ENCODE measurements at regions of chr2 and their contacts with region 1.

Region 1: DNA sequence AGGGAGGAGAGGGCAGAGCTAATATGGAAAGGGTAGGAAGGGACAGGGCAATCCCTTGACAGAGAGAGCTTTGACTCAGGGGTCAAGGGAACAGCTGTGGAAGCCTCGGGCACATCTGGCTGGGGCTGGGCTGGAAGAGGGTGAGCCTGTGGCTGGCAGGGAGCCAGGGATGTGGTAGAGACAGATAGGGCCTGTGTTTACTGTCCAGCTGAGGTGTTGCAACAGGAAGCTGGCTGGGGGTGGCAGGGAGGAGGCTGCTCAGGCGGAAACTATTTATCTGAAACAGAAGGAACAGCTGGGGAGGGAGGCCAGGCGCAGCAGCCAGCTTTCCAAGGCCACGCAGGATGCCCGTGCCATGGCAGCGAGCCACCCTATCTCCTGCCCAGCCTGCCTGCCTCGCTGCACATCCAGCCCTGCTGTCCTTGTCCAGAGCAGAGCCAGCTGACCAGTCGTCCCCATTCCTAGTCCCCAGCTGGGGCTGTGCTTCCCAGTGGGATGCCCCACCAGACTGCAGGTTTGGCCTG is 264.7 kb downstream of the CYP26B1 start:
- DNase-seq: peak; percentile 91

Region 2: GRCh38 chr2:71831193-71831577 is 51.8 kb before region 1 on chr2:
- intact Hi-C with region 1: loop called (anchors 5 kb)
- DNase-seq: no peak

Region 3: DNA sequence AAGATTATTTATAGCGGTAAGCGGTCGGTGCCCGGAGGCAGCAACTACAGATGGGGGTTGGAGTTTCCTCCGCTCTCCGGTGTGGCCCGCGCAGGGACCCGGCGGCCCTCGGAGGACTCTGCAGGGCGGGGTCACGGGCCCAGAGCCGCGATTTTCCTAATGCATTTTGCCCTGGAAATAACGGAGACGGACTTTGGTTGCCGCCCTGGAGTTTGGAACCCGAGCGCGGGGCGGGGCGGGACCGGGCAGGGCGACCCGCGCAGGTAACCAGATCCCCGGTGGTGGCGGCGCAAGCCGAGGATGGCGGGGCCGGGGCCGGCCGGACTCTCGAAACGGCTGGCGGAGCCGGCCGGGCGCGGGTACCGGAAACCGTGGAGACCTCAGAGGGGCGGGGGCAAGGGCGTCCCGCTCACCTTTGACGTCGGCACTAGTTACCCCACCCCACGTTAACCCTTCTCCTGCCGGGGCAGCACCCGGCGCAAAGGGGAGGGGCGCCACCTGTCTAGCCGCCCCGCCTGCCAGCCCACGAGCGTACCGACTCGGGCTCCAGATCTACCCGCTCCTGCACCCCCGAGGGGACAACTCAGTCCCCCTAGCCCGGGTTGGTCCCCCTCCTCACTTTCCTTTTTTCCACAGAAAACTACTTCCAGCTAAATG is 261.7 kb after region 1 on chr2:
- intact Hi-C with region 1: loop called (anchors 5 kb)
- DNase-seq: no peak